ENCODE measurements at regions of chr13 and their contacts with region 1.

Region 1: DNA sequence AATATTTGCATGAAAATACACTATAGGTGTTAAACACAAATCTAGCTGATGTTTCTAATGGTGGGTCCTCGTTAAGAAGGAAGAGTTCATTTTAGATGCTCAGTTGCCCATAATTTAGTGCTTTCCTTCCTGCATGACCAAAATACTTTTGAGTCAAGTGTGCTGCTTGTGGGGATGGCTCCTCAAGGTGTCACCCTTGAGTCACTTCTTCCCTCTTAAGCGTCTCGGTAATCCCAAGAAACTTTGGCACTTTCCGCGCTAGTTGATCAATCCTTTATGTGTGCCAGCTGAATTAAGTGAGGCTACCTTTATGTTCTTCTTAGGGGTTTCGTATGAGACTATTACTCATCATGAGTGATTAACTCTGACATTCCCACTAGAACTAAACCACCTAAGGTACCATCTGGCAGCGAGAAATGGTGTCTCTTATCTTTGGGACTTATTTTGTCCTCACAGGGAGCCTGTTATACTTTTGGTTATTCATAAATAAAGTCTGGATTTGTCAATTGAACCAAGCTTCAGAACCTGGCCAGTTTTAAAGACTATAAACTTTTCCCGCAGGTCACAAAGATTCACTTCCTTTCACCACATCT is 106.8 kb downstream of the NHLRC3 start:
- DNase-seq: peak; percentile 70
- ATAC-seq: peak; percentile 91
- H3K4me3 ChIP-seq: no peak overlapping the region
- H3K27ac ChIP-seq: no peak overlapping the region
- H3K4me1 ChIP-seq: no peaks in the 10 kb centered on the region
- H3K27me3 ChIP-seq: peaks cover 6% of the 10 kb centered on the region
- CTCF ChIP-seq: peak; percentile 89
- POLR2A ChIP-seq: 0 out of 2 replicates have a peak, but pooled peaks have one; percentile 25
- RAD21 ChIP-seq: peak; percentile 88

Region 2: GRCh38 chr13:38494445-38494844 is 650.6 kb before region 1 on chr13:
- CTCF ChIA-PET with region 1: no interaction called
- POLR2A ChIA-PET with region 1: no interaction called
- dilution Hi-C with region 1: no loop called
- in situ Hi-C with region 1: no loop called
- intact Hi-C with region 1: no loop called
- DNase-seq: no peak
- ATAC-seq: no peak
- H3K4me3 ChIP-seq: no peak overlapping the region
- H3K27ac ChIP-seq: no peak overlapping the region
- H3K4me1 ChIP-seq: no peaks in the 10 kb centered on the region
- H3K27me3 ChIP-seq: no peaks in the 10 kb centered on the region
- CTCF ChIP-seq: no peak
- POLR2A ChIP-seq: no peak
- RAD21 ChIP-seq: no peak

Region 3: DNA sequence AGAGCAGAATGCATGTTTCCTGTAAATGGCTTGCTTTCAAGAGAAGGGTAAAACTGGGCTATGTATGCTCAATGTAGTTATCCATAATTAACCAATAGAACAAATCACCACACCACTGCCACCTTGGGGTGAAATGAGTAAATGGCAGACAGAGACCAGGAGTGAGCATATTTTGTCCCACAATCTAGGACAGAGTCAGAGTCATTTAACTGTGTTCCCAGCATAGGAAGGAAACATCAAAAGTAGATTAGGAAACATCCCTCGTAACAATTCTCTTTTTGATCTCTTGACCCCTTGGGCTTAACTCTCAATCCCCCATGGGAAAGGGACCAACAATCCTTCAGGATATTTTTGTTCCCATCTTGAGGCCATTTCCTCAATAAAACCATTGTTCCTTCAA is 118.0 kb after region 1 on chr13:
- CTCF ChIA-PET with region 1: no interaction called
- POLR2A ChIA-PET with region 1: no interaction called
- dilution Hi-C with region 1: no loop called
- in situ Hi-C with region 1: no loop called
- intact Hi-C with region 1: loop called (anchors 1 kb)
- DNase-seq: peak; percentile 23
- ATAC-seq: peak; percentile 93
- H3K4me3 ChIP-seq: no peak overlapping the region
- H3K27ac ChIP-seq: no peak overlapping the region
- H3K4me1 ChIP-seq: peaks cover 6% of the 10 kb centered on the region
- H3K27me3 ChIP-seq: no peaks in the 10 kb centered on the region
- CTCF ChIP-seq: peak; percentile 62
- POLR2A ChIP-seq: no peak
- RAD21 ChIP-seq: peak; percentile 51

Region 4: GRCh38 chr13:39406688-39407087 is 261.7 kb after region 1 on chr13:
- CTCF ChIA-PET with region 1: no interaction called
- POLR2A ChIA-PET with region 1: no interaction called
- dilution Hi-C with region 1: no loop called
- in situ Hi-C with region 1: no loop called
- intact Hi-C with region 1: loop called (anchors 5 kb)
- DNase-seq: no peak
- ATAC-seq: no peak
- H3K4me3 ChIP-seq: no peak overlapping the region
- H3K27ac ChIP-seq: no peak overlapping the region
- H3K4me1 ChIP-seq: peaks cover 4% of the 10 kb centered on the region; the same call in 1 of the 2 replicates
- H3K27me3 ChIP-seq: no peaks in the 10 kb centered on the region
- CTCF ChIP-seq: no peak
- POLR2A ChIP-seq: no peak
- RAD21 ChIP-seq: no peak

Region 5: GRCh38 chr13:39501702-39502324 is 356.8 kb after region 1 on chr13:
- CTCF ChIA-PET with region 1: no interaction called
- POLR2A ChIA-PET with region 1: no interaction called
- dilution Hi-C with region 1: no loop called
- in situ Hi-C with region 1: no loop called
- intact Hi-C with region 1: loop called (anchors 10 kb)
- DNase-seq: no peak
- ATAC-seq: no peak
- H3K4me3 ChIP-seq: no peak overlapping the region
- H3K27ac ChIP-seq: no peak overlapping the region
- H3K4me1 ChIP-seq: peaks cover 11% of the 10 kb centered on the region
- H3K27me3 ChIP-seq: no peaks in the 10 kb centered on the region
- CTCF ChIP-seq: no peak
- POLR2A ChIP-seq: no peak
- RAD21 ChIP-seq: no peak

Region 6: GRCh38 chr13:39676315-39676876 is 531.4 kb after region 1 on chr13:
- CTCF ChIA-PET with region 1: no interaction called
- POLR2A ChIA-PET with region 1: no interaction called
- dilution Hi-C with region 1: no loop called
- in situ Hi-C with region 1: no loop called
- intact Hi-C with region 1: loop called (anchors 2 kb)
- DNase-seq: peak; percentile 39
- ATAC-seq: no peak; the same call in 1 of the 2 replicates
- H3K4me3 ChIP-seq: no peak overlapping the region
- H3K27ac ChIP-seq: no peak overlapping the region
- H3K4me1 ChIP-seq: no peaks in the 10 kb centered on the region
- H3K27me3 ChIP-seq: no peaks in the 10 kb centered on the region
- CTCF ChIP-seq: peak; percentile 47
- POLR2A ChIP-seq: no peak
- RAD21 ChIP-seq: peak; percentile 32; the same call in 1 of the 2 replicates